Aorta (tissue), 5 donors: ENCODE measurements at regions of chr3 and their contacts with region 1.

Region 1: GRCh38 chr3:155323063-155323666 is 29.7 kb upstream of the STRIT1 start:
- DNase-seq: no peak
- ATAC-seq: peak; percentile 60
- H3K4me3 ChIP-seq: no peak overlapping the region
- H3K27ac ChIP-seq: no peak overlapping the region
- H3K4me1 ChIP-seq: no peaks in the 10 kb centered on the region
- H3K27me3 ChIP-seq: no peaks in the 10 kb centered on the region

Region 2: GRCh38 chr3:154334973-154335420 is 988.2 kb before region 1 on chr3:
- intact Hi-C with region 1: loop called in 1 of 2 experiments (anchors 5 kb)
- DNase-seq: no peak
- ATAC-seq: no peak
- H3K4me3 ChIP-seq: no peak overlapping the region
- H3K27ac ChIP-seq: no peak overlapping the region
- H3K4me1 ChIP-seq: no peaks in the 10 kb centered on the region
- H3K27me3 ChIP-seq: no peaks in the 10 kb centered on the region

Region 3: DNA sequence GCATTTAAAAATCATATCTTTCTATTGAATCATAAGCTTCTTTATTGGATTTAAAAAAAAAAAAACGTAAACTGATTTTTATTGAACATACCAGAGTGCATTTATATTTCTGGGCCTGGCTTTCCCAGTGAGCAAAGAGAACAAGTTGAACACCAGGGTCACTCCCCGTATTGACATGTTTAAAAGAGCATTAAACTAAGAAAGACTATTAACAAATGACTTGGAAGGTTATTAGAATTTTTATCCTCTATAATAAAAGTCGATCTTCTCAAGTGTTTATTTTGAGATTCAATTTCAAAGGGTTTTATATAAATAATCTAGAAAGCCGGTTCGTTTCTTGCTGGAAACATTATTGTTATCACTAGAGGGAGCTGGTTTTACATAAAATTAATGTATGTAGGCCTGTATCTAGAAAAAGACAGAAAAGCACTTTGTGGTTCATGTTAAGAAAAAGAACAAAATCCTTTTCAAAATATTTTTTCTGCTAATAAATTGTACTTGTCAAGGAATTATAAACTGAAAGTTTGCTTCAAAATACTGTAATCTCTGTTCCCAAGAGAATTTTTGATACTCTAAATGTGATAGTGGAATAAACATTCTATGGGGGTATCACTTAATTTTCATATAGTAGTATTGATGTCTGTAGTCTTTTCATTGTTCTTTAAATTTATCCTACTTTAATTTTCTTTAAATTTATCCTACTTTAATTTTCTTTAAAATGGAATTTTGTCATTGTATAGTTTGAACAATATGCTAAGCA is 564.9 kb before region 1 on chr3:
- intact Hi-C with region 1: loop called (anchors 5 kb)
- DNase-seq: no peak
- ATAC-seq: no peak
- H3K4me3 ChIP-seq: no peak overlapping the region
- H3K27ac ChIP-seq: no peak overlapping the region
- H3K4me1 ChIP-seq: no peaks in the 10 kb centered on the region
- H3K27me3 ChIP-seq: no peaks in the 10 kb centered on the region

Region 4: GRCh38 chr3:154764856-154765640 is 558.1 kb before region 1 on chr3:
- intact Hi-C with region 1: loop called in 1 of 2 experiments (anchors 5 kb)
- DNase-seq: no peak
- ATAC-seq: no peak
- H3K4me3 ChIP-seq: no peak overlapping the region
- H3K27ac ChIP-seq: no peak overlapping the region
- H3K4me1 ChIP-seq: peaks cover 0 to 1% of the 10 kb centered on the region in 2 donors
- H3K27me3 ChIP-seq: no peaks in the 10 kb centered on the region

Region 5: GRCh38 chr3:156685752-156686151 is 1362.6 kb after region 1 on chr3:
- intact Hi-C with region 1: no loop called
- DNase-seq: no peak
- ATAC-seq: no peak
- H3K4me3 ChIP-seq: no peak overlapping the region
- H3K27ac ChIP-seq: no peak overlapping the region
- H3K4me1 ChIP-seq: peaks cover 2 to 5% of the 10 kb centered on the region in 2 donors
- H3K27me3 ChIP-seq: no peaks in the 10 kb centered on the region